ENCODE measurements at regions of chr3 and their contacts with region 1.

Region 1: DNA sequence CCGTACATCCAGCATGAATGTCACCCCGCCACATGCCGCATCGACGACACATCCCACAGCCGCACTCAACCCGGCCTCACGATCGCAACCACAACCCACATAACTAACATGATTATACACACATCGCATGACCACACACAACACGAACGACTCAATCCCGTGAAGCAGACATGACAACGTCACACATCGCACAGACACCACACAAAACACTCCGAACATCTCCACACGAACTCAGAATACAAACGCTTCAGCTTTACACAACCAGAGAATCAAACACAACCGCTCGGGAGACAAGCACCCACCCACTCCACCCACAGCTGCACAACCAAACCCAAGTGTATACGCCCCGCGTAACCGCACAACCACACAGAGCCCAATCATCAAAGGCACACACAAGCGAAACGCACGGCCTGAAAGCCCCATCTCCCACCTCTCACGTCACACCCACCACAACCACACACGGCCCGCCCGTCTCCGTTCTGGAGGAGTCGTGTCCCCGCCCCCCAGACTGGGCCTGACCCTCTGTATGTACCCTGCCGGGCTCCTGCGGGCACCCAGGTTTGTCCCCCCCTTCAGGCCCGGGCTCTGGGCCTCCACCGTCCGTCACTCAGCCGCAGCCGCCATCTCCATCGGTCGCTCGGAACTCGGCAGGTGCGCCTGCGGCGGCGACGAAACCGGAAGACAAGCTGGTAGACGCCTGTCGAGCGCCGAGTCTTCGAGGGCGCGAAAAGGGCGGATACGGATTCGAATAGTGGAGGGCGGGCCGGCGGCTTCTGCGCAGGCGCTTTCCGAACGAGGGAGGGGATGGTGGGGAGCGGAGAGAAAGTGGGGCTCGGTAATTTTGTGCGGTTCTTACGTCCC is at the start of gene RBSN:
- DNase-seq: peak; percentile 96
- ATAC-seq: peak; percentile 77
- H3K4me3 ChIP-seq: peak within 1 kb of the TSS; percentile 100
- H3K27ac ChIP-seq: peak within 1 kb of the TSS; percentile 47
- H3K4me1 ChIP-seq: peaks cover 26% of the 10 kb centered on the region
- H3K27me3 ChIP-seq: no peaks in the 10 kb centered on the region
- CTCF ChIP-seq: no peak
- total RNA-seq, gene RBSN: 18.7 and 26.8 TPM in 2 replicates

Region 2: DNA sequence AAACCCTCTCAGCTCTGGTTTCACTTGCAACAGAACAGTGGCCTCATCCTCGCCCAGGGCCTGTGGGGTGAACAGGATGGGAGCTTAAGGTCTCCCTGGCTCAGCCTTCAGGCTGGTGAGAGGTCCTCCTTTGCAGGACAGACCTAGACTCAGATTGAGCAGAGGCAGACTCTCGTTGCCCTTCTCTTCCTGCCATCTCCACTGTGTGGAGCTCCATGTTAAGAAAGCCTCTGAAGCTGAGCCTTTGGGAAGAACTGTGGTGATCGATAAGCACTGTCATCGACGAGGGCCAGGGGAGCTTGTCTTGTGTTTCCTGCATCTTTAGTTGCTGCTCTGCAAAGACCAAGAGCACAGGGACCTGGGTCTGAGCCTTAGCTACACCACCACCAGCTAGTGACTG is 520.8 kb before region 1 on chr3:
- CTCF ChIA-PET with region 1: no interaction called
- POLR2A ChIA-PET with region 1: no interaction called
- intact Hi-C with region 1: no loop called
- DNase-seq: peak; percentile 19
- ATAC-seq: peak; percentile 64
- H3K4me3 ChIP-seq: no peak overlapping the region
- H3K27ac ChIP-seq: no peak overlapping the region
- H3K4me1 ChIP-seq: peaks cover 1% of the 10 kb centered on the region; the same call in 1 of the 2 replicates
- H3K27me3 ChIP-seq: no peaks in the 10 kb centered on the region
- CTCF ChIP-seq: peak; percentile 30; the same call in 1 of the 2 replicates

Region 3: GRCh38 chr3:14947886-14948555 is 150.7 kb before region 1 on chr3:
- CTCF ChIA-PET with region 1: no interaction called
- POLR2A ChIA-PET with region 1: no interaction called
- intact Hi-C with region 1: loop called (anchors 2 kb)
- DNase-seq: peak; percentile 97
- ATAC-seq: peak; percentile 92
- H3K4me3 ChIP-seq: peak overlapping the region; percentile 91
- H3K27ac ChIP-seq: peak overlapping the region; percentile 97
- H3K4me1 ChIP-seq: peaks cover 16% of the 10 kb centered on the region; the same call in 1 of the 2 replicates
- H3K27me3 ChIP-seq: no peaks in the 10 kb centered on the region
- CTCF ChIP-seq: no peak

Region 4: DNA sequence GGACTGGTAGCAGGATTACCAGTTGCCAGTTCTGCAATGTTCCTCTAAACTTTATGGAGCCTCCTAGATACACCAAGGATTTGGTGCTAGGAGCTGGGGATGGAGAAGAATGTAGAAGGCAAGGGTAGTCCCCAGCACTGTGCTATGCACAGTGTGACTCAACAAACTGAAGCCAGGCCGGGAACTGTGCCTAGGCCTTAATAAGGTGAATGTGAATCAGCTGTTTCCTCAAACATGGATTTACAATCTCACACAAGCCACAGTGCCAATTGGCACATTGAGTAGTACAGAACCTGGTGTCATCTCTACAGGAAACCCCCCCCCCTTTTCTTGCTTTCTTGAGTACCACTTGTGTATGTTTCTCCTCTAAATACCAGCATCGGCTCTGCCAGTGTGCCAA is 66.1 kb before region 1 on chr3:
- CTCF ChIA-PET with region 1: no interaction called
- POLR2A ChIA-PET with region 1: no interaction called
- intact Hi-C with region 1: no loop called
- DNase-seq: no peak
- ATAC-seq: no peak
- H3K4me3 ChIP-seq: no peak overlapping the region
- H3K27ac ChIP-seq: no peak overlapping the region
- H3K4me1 ChIP-seq: no peaks in the 10 kb centered on the region
- H3K27me3 ChIP-seq: no peaks in the 10 kb centered on the region
- CTCF ChIP-seq: no peak

Region 5: GRCh38 chr3:15064835-15065549 is 33.7 kb before region 1 on chr3 and contains the start of gene MRPS25:
- CTCF ChIA-PET with region 1: no interaction called
- POLR2A ChIA-PET with region 1: no interaction called
- intact Hi-C with region 1: loop called (anchors 2 kb)
- DNase-seq: peak; percentile 94
- ATAC-seq: peak; percentile 97
- H3K4me3 ChIP-seq: peak within 1 kb of the TSS; percentile 88
- H3K27ac ChIP-seq: peak within 1 kb of the TSS; percentile 54
- H3K4me1 ChIP-seq: peaks cover 17% of the 10 kb centered on the region
- H3K27me3 ChIP-seq: no peaks in the 10 kb centered on the region
- CTCF ChIP-seq: no peak
- total RNA-seq, gene MRPS25: 42.9 and 46.0 TPM in 2 replicates

Region 6: GRCh38 chr3:15159501-15160136 is 60.9 kb after region 1 on chr3:
- CTCF ChIA-PET with region 1: no interaction called
- POLR2A ChIA-PET with region 1: no interaction called
- intact Hi-C with region 1: no loop called
- DNase-seq: no peak
- ATAC-seq: no peak
- H3K4me3 ChIP-seq: no peak overlapping the region
- H3K27ac ChIP-seq: no peak overlapping the region
- H3K4me1 ChIP-seq: no peaks in the 10 kb centered on the region
- H3K27me3 ChIP-seq: peaks cover 47% of the 10 kb centered on the region
- CTCF ChIP-seq: no peak

Region 7: DNA sequence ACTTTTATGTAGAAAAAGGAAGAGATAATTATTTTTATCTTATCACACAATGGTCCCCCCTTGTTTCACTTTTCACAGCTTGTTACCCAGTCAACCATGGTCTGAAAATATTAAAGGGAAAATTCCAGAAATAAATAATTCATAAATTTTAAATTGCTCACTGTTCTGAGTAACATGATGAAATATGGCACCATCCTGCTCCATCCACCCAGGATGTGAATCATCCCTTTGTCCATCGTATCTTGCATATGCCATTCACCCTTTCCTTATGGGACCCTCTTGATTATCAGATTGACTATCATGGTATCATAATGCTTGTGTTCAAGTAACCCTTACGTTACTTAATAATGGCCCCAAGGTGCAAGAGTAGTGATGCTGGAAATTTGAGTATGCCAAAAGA is 655.3 kb after region 1 on chr3:
- CTCF ChIA-PET with region 1: no interaction called
- POLR2A ChIA-PET with region 1: interaction called, 13 read pairs
- intact Hi-C with region 1: no loop called
- DNase-seq: peak; percentile 65
- ATAC-seq: peak; percentile 57
- H3K4me3 ChIP-seq: no peak overlapping the region
- H3K27ac ChIP-seq: peak overlapping the region; percentile 21
- H3K4me1 ChIP-seq: peaks cover 15% of the 10 kb centered on the region
- H3K27me3 ChIP-seq: no peaks in the 10 kb centered on the region
- CTCF ChIP-seq: no peak